ENCODE measurements at regions of chr20 and their contacts with region 1.

Region 1: DNA sequence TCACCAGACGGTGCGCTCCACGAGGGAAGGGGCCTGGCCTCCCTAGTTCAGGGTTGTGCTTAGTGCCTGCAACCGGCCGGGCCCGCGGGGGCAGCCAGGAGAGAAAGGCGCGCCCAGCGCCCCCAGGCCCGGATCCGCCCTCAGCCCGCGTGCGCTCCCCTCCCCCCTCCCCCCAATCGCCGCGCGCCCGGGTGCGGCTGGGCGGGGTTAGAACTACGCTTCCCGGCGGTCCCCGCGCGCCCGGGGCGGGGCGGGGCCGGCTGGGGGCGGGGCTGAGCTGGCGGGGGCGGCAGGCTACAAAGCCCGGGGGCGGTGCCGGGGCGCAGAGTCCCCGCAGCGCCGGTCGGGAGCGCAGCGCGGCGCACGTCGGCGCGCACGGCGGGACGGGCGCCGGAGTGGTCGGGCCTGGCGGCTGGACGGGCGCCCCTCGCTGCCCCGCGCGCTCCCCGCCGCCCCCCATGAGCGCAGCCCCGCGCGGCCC is at the start of gene RBM38:
- DNase-seq: peak; percentile 91
- ATAC-seq: peak; percentile 66
- H3K4me3 ChIP-seq: peak within 1 kb of the TSS; percentile 82 to 99 (median 91)
- H3K4me3 Mint-ChIP-seq: peak within 1 kb of the TSS; percentile 98
- H3K27ac ChIP-seq: peak within 1 kb of the TSS; percentile 96 to 98
- H3K27ac Mint-ChIP-seq: peak within 1 kb of the TSS; percentile 98
- H3K4me1 ChIP-seq: peaks cover 54 to 66% of the 10 kb centered on the region in 2 donors
- H3K4me1 Mint-ChIP-seq: peaks cover 51% of the 10 kb centered on the region
- H3K27me3 ChIP-seq: no peaks in the 10 kb centered on the region
- H3K27me3 Mint-ChIP-seq: no peaks in the 10 kb centered on the region
- CTCF ChIP-seq: no peak
- total RNA-seq, gene RBM38: 224 and 225 TPM in 2 replicates

Region 2: DNA sequence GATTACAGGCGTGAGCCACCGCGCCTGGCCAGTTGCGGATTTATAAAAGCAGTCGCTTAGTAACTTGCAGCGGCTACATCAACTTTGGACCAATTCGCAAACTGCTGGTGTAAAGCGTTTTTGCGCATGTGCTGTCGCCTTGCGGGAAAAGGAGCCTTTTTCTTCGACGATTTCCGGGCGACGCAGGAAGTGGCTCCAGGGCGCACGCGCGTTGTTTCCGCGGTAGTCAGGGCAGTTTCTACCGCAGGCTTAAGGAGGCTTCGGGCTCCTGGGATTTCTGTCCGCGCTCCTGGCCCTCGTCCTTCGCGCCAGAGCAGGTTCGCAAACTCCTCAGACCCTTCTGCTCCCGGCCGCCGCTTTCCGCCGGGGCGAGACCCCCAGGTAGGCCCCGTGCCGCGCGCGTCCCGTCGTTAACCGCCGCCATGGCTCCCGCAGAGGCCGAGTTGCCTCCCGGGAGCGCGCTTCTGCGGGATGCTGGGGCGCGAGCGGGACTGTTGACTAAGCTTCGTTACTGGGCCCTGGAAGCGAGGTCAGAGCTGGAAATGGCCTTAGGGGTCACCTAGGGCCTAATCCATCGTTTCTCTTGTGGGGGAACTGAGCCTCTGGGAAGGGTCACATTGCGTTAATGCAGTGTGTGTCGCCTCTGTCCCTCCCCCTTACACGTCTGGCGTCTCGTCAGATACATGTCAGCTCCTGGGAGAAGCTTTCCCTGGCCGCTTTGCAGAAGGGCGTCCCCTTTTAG is 39.9 kb before region 1 on chr20 and contains the start of gene RAE1:
- CTCF ChIA-PET with region 1: interaction called, 3 read pairs
- POLR2A ChIA-PET with region 1: interaction called, 3 read pairs
- intact Hi-C with region 1: loop called (anchors 2 kb)
- DNase-seq: peak; percentile 94
- ATAC-seq: peak; percentile 84
- H3K4me3 ChIP-seq: peak within 1 kb of the TSS; percentile 68 to 99 (median 89)
- H3K4me3 Mint-ChIP-seq: peak within 1 kb of the TSS; percentile 92
- H3K27ac ChIP-seq: peak within 1 kb of the TSS; percentile 58 to 81
- H3K27ac Mint-ChIP-seq: peak within 1 kb of the TSS; percentile 92
- H3K4me1 ChIP-seq: peaks cover 9 to 18% of the 10 kb centered on the region in 2 donors
- H3K4me1 Mint-ChIP-seq: peaks cover 22% of the 10 kb centered on the region
- H3K27me3 ChIP-seq: no peaks in the 10 kb centered on the region
- H3K27me3 Mint-ChIP-seq: no peaks in the 10 kb centered on the region
- CTCF ChIP-seq: no peak
- total RNA-seq, gene RAE1: 32.6 and 36.4 TPM in 2 replicates

Region 3: DNA sequence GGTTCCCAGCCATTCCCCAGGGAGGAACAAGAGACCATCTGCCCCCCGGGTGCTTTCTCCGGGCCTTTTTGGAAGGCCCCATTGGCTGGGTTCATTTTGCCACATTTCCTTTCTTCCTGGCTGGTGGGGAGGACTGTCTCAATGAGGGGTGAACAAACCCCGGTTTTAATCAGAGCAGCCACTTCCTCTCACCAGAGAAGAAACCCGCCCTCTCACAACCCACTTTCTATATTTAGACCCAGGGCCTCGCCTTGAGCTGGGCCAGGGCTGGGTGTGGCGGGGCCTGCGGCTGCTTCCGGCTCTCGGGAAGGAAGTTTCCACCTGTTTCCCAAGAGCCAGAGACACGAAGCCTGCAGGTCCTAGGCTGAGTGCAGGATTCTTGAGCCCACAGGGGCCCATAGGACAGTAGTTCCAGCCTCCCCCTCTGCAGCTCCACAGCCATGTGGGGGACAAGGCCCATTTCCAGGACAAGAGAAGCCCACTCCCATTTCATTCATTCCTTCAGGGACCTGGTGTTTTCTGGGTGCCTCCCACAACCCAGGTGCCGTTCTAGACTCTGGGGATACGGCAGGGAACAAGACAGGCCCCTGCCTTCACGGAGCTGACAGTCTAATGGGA is 41.9 kb after region 1 on chr20:
- CTCF ChIA-PET with region 1: interaction called, 36 read pairs
- POLR2A ChIA-PET with region 1: interaction called, 9 read pairs
- intact Hi-C with region 1: loop called (anchors 10 kb)
- DNase-seq: peak; percentile 83
- ATAC-seq: peak; percentile 72
- H3K4me3 ChIP-seq: peak overlapping the region in 4 of 5 experiments; percentile 7 to 25 (median 18)
- H3K4me3 Mint-ChIP-seq: peak overlapping the region; percentile 56
- H3K27ac ChIP-seq: peak overlapping the region; percentile 87 to 93
- H3K27ac Mint-ChIP-seq: peak overlapping the region; percentile 89
- H3K4me1 ChIP-seq: peaks cover 76 to 85% of the 10 kb centered on the region in 2 donors
- H3K4me1 Mint-ChIP-seq: peaks cover 81% of the 10 kb centered on the region
- H3K27me3 ChIP-seq: no peaks in the 10 kb centered on the region
- H3K27me3 Mint-ChIP-seq: no peaks in the 10 kb centered on the region
- CTCF ChIP-seq: no peak

Region 4: DNA sequence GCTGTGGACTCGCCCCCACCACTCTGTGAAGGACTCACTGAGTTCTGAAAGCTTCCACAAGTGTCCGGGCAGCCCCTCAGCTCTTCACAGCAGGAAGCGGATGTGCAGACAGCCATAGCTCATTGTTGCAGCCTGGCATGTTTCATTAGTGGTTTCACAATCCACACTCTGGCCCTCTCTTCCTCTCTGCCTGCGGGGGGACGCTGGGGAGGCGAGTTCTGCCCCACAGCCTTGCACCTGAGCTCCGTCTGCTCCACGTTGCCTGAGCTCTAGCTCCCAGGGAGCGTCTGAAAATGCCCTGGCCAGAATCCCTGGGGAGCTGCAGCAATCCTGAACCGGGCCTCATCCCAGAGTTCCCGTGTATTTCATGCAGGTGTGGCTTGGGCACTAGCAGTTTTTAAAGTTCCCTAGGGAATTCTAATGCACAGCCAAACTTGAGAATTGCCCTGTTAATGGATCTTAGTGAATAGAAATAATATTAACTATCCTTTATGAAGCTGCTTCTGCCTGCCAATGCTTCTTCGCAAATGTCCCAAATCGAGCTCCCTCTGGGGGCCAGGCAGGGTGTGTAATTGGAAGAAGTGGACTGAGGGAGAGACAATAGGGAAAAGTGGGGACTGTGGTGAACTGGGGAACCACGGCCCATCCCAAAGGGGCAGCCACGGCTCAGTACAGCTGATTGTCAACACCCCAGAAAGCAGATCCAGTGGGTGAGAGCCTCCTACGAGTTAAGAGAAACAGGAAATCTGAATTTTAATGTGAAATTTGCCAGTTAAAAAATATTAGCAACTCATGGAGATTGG is 82.3 kb after region 1 on chr20:
- CTCF ChIA-PET with region 1: interaction called, 17 read pairs
- POLR2A ChIA-PET with region 1: interaction called, 7 read pairs
- intact Hi-C with region 1: no loop called
- DNase-seq: peak; percentile 69
- ATAC-seq: peak; percentile 52
- H3K4me3 ChIP-seq: peak overlapping the region in 2 of 5 experiments; percentile 19 to 37
- H3K4me3 Mint-ChIP-seq: peak overlapping the region; percentile 65
- H3K27ac ChIP-seq: peak overlapping the region in 1 of 2 donors; percentile 2
- H3K27ac Mint-ChIP-seq: peak overlapping the region; percentile 61
- H3K4me1 ChIP-seq: peaks cover 72 to 84% of the 10 kb centered on the region in 2 donors
- H3K4me1 Mint-ChIP-seq: peaks cover 86% of the 10 kb centered on the region
- H3K27me3 ChIP-seq: no peaks in the 10 kb centered on the region
- H3K27me3 Mint-ChIP-seq: peaks cover 4% of the 10 kb centered on the region
- CTCF ChIP-seq: no peak

Region 5: GRCh38 chr20:57480444-57481160 is 89.5 kb after region 1 on chr20:
- CTCF ChIA-PET with region 1: interaction called, 11 read pairs
- POLR2A ChIA-PET with region 1: interaction called, 10 read pairs
- intact Hi-C with region 1: no loop called
- DNase-seq: peak; percentile 86
- ATAC-seq: peak; percentile 78
- H3K4me3 ChIP-seq: peak overlapping the region in 3 of 5 experiments; percentile 17 to 52 (median 25)
- H3K4me3 Mint-ChIP-seq: peak overlapping the region; percentile 83
- H3K27ac ChIP-seq: peak overlapping the region in 1 of 2 donors; percentile 66
- H3K27ac Mint-ChIP-seq: peak overlapping the region; percentile 92
- H3K4me1 ChIP-seq: peaks cover 63 to 76% of the 10 kb centered on the region in 2 donors
- H3K4me1 Mint-ChIP-seq: peaks cover 72% of the 10 kb centered on the region
- H3K27me3 ChIP-seq: no peaks in the 10 kb centered on the region
- H3K27me3 Mint-ChIP-seq: no peaks in the 10 kb centered on the region
- CTCF ChIP-seq: no peak

Region 6: DNA sequence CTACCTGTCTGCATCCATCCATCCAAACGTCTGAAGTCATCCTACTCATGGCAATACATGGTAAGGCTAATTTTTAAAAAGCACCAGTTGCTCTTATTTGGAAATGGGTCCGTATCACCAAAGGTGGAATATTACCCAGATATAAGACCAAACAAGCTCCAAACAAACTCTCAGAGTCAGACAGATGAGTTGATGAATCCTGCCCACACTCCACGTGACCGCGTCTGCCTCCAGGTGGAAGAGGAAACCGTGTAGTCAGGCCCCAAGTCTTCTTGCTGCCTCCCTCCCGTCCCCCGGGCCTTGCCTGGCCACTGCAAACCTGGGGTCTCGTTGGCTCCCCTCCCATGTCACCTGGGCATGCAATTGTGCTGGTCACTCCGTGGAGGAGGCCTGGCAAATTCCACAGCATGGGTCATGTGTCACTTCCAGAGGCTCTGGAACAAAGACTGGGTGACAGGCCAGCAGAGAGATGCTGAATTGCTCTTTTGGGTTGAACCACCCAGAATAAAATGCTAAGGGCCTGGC is 102.0 kb after region 1 on chr20:
- CTCF ChIA-PET with region 1: interaction called, 27 read pairs
- POLR2A ChIA-PET with region 1: interaction called, 10 read pairs
- intact Hi-C with region 1: no loop called
- DNase-seq: no peak
- ATAC-seq: no peak
- H3K4me3 ChIP-seq: no peak overlapping the region
- H3K4me3 Mint-ChIP-seq: no peak overlapping the region
- H3K27ac ChIP-seq: no peak overlapping the region
- H3K27ac Mint-ChIP-seq: no peak overlapping the region
- H3K4me1 ChIP-seq: peaks cover 11 to 18% of the 10 kb centered on the region in 2 donors
- H3K4me1 Mint-ChIP-seq: peaks cover 38% of the 10 kb centered on the region
- H3K27me3 ChIP-seq: peaks cover 0 to under 1% (median 0%) of the 10 kb centered on the region in 4 experiments
- H3K27me3 Mint-ChIP-seq: peaks cover 3% of the 10 kb centered on the region
- CTCF ChIP-seq: no peak

Region 7: GRCh38 chr20:57622579-57623377 is 231.7 kb after region 1 on chr20:
- CTCF ChIA-PET with region 1: interaction called, 3 read pairs
- POLR2A ChIA-PET with region 1: interaction called, 17 read pairs
- intact Hi-C with region 1: loop called (anchors 2 kb)
- DNase-seq: peak; percentile 69
- ATAC-seq: no peak
- H3K4me3 ChIP-seq: no peak overlapping the region
- H3K4me3 Mint-ChIP-seq: peak overlapping the region; percentile 13
- H3K27ac ChIP-seq: no peak overlapping the region
- H3K27ac Mint-ChIP-seq: peak overlapping the region; percentile 80
- H3K4me1 ChIP-seq: peaks cover 54 to 59% of the 10 kb centered on the region in 2 donors
- H3K4me1 Mint-ChIP-seq: peaks cover 65% of the 10 kb centered on the region
- H3K27me3 ChIP-seq: no peaks in the 10 kb centered on the region
- H3K27me3 Mint-ChIP-seq: no peaks in the 10 kb centered on the region
- CTCF ChIP-seq: peak; percentile 82